ENCODE measurements at regions of chr10 and their contacts with region 1.

Region 1: DNA sequence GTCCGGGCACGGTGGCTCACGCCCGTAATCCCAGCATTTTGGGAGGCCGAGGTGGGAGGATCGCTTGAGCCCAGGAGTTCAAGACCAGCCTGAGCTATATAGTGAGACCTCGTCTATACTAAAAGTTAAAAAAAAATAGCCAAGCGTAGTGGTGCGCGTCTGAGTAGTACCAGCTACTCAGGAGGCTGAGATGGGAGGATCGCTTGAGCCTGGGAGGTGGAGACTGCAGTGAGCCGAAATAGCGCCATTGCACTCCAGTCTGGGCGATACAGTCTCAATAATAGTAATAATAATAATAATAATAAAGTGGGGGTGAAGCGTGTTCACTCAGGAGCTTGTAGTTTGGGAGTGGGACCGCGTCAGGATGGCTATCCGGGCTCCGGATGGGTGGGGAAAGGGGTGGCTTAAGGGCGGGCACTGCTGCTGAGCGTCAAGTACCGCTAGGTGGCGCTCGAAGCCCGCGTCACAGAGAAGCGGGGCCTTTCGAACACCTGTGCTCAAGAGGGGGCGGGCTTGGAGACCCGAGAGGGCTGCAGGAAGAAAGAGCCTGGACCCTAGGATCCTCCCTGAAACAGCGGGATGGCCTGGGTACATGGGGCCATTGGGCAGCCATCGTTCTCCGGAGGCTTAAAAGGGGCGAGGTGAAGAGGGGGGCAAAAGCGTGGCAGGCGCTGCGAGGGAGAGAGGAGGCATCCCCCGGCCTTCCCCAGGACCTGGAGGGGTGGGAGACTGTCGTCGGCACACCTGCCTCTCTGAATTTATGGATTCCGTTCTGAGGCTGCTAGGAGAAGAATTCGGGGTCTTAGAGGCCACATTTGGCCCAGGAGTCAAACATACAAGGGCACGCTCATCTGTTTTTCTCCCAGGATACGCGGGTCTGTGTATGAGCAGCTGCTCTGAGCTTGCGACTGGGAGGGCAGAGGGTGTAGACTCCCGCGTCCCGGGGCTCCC is 14.5 kb downstream of the LBX1 start:
- DNase-seq: peak; percentile 79
- CTCF ChIP-seq: peak; percentile 93

Region 2: GRCh38 chr10:100930368-100930767 is 284.4 kb before region 1 on chr10:
- in situ Hi-C with region 1: no loop called
- DNase-seq: no peak
- CTCF ChIP-seq: no peak

Region 3: DNA sequence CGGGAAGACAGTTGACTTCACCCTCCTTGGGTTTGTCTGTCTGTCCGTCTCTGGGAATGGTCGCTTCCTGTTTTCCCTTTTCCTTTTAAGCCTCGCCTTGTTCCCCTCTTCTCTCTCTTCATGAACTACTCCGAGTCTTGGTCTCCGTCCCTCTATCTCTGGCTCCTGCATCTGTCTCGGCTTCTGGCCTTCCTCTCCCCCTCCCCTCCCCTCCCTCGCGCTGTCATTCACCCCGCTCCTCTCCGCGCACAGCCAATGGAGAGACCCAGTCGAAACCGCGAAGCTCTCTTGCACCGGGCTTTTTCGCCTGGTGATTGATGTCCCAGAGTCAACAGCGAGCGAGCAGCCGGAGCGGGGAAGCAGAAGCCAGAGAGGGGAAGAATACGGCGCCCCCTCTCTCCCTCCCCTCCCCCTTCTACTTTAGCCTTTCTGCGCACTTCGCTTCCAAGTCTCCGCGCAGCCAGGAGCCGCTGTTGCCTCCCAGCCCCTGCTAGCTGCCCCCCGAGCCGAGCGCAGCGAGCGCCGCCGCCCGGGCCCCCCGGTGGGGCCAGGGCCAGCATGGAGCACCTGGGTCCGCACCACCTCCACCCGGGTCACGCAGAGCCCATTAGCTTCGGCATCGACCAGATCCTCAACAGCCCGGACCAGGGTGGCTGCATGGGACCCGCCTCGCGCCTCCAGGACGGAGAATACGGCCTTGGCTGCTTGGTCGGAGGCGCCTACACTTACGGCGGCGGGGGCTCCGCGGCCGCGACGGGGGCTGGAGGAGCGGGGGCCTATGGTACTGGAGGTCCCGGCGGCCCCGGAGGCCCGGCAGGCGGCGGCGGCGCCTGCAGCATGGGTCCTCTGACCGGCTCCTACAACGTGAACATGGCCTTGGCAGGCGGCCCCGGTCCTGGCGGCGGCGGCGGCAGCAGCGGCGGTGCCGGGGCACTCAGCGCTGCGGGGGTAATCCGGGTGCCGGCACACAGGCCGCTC is 83.4 kb before region 1 on chr10 and contains the start of gene TLX1:
- in situ Hi-C with region 1: loop called (anchors 10 kb)
- DNase-seq: peak; percentile 50
- CTCF ChIP-seq: no peak

Region 4: GRCh38 chr10:101397140-101397539 is 182.4 kb after region 1 on chr10:
- in situ Hi-C with region 1: no loop called
- DNase-seq: no peak
- CTCF ChIP-seq: no peak

Region 5: DNA sequence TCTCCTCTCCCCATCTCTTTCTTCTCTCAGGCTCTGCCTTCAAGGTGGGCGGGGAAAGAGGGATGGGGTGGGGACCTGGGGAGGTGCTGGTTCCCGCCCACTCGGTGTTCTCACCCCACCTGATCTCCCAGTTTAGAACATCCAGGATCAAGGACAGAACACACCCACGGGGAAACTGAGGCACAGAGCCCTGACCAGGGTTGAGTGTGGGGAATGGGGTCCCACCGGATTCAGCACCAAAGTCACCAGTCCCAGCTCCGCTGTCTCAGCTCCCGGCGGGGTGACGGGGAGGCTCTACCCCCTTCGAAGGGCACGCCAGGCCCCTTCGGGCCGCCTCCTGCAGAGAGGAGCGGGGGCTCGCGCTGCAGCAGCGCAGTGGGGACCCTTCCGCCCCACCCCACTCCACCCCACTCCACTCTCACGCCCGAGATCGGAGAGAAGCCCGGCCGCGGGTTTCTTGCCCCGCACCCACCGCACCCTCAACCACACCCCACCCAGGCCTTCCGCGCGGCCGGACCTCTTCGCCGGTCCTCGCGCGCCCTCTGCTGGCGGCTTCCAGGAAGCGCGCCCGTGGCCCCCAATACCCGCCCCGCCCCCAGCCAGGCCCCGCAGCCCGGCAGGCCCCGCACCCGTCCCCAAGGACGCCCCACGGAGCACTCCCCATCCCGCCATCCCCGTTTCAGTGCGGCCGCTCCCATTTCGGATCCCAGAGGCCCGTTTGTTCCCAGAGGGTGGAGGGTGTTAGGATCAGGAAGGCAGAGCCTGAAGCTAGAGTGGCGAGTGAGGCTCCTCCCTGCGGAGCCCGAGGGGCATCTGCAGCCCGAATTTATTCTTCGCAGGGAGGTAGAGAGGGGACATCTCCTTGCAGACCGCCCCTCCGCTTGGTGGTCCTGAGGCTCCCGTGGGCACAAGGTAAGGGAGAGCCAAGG is 355.4 kb after region 1 on chr10:
- in situ Hi-C with region 1: loop called (anchors 25 kb)
- DNase-seq: peak; percentile 94
- CTCF ChIP-seq: peak; percentile 90

Measured in GM13977 (cell line).